Sciatic nerve (tissue), 2 donors: ENCODE measurements at regions of chr6 and their contacts with region 1.

Region 1: DNA sequence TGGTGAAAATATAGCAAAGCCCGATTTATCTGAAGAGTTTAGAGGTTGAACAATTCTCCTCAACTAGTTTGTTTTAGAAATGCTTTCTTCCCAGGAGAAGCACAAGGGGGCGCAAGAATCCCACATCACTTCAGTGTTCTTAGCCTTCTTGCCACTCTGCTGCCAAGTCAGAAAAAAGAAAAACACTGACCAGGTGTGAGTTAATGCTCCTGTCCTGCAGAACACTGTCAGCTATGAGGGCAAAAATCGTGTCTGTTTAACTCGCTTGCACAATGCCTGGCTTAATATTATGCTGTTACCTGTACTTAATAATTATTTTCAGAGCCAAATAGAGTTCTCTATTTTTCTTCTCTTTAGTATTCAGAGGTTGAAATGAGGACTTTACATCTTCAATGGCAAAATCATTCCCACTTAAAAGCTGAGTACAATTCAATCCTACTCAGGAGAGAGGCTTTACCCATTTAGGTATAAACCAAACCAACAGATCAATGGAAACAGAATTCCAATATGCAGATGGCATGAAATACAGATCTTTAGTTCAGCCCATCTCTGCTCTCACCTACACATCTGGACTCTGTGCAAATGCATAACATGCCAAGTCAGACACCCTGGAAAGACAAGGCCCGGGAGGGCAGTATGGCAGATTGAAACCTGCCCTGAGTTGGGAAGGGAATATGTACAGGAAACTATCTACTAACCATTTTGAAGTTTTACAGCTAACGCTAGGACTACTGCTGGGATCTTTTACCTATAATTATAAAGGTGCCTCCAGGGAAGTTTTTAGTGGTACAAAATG is 71.4 kb upstream of the TULP1 start:
- DNase-seq: peak; percentile 77
- ATAC-seq: peak; percentile 76

Region 2: DNA sequence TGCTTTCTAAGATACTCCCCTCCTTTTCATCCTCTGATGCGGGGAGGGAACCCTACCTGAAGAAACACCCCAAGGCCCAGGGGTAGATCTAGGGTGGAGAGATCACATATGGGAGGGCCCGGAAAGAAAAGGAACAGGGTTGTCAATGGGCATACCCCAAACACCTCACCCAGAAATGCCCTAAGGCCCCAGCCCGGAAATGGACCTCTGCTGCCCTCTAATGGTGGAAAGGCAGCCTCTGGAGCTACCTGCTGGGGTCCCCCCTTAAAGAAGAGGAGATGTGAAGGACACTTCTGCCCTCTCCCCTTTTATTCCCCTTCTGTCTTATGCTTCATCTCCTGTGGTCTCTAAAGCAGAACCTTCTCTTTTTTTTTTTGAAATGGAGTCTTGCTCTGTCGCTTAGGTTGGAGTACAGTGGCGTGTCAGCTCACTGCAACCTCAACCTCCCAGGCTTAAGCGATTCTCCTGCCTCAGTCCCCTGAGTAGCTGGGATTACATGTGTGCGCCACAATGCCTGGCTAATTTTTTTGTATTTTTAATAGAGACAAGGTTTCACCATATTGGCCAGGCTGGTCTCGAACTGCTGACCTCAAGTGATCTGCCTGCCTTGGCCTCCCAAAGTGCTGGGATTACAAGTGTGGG is 152.3 kb after region 1 on chr6:
- intact Hi-C with region 1: loop called (anchors 2 kb)
- DNase-seq: peak; percentile 89
- ATAC-seq: peak; percentile 50